Breast epithelium (tissue), 4 donors: ENCODE measurements at regions of chr6 and their contacts with region 1.

Region 1: DNA sequence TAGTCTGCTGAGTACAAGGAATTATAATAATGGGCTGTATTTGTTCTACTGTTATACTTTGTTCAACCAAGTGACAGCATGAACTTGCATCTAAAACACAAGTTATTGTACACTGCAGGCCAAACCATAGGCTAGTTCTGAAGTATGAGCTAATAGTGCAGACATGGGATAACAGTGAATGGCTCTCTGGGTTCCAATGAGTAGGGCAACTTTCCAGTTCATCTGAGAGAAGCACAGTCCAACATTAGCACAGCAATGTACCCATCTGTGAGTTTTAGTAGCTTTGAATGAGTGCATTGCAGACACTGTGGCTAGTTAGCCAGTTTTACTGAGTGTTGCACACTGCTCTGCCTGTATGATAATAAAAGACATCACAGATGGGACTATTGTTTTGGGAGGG is 56.5 kb upstream of the FUT9 start:
- DNase-seq: no peak
- H3K4me3 ChIP-seq: no peak overlapping the region
- H3K27ac ChIP-seq: no peak overlapping the region
- H3K4me1 ChIP-seq: no peaks in the 10 kb centered on the region
- H3K27me3 ChIP-seq: no peaks in the 10 kb centered on the region
- CTCF ChIP-seq: no peak
- POLR2A ChIP-seq: no peak

Region 2: DNA sequence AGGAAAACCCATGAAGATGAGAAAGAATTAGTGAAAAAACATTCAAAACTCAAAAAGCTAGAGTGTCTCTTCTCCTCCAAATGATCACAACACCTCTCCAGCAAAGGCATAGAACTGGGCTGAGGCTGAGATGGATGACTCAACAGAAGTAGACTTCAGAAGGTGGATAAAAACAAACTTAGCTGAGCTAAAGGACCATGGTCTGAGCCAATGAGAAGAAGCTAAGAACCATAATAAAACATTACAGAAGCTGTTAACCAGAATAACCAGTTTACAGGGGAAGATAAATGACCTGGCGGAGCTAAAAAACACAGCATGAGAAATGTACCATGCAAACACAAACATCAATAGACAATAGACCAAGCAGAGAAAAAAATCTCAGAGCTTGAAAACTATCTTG is 1286.0 kb before region 1 on chr6:
- intact Hi-C with region 1: no loop called
- DNase-seq: no peak
- H3K4me3 ChIP-seq: no peak overlapping the region
- H3K27ac ChIP-seq: no peak overlapping the region
- H3K4me1 ChIP-seq: no peaks in the 10 kb centered on the region
- H3K27me3 ChIP-seq: no peaks in the 10 kb centered on the region
- CTCF ChIP-seq: no peak
- POLR2A ChIP-seq: no peak

Region 3: GRCh38 chr6:96124778-96125177 is 165.5 kb after region 1 on chr6:
- intact Hi-C with region 1: loop called (anchors 5 kb)
- DNase-seq: no peak
- H3K4me3 ChIP-seq: no peak overlapping the region
- H3K27ac ChIP-seq: no peak overlapping the region
- H3K4me1 ChIP-seq: no peaks in the 10 kb centered on the region
- H3K27me3 ChIP-seq: no peaks in the 10 kb centered on the region
- CTCF ChIP-seq: no peak
- POLR2A ChIP-seq: no peak

Region 4: DNA sequence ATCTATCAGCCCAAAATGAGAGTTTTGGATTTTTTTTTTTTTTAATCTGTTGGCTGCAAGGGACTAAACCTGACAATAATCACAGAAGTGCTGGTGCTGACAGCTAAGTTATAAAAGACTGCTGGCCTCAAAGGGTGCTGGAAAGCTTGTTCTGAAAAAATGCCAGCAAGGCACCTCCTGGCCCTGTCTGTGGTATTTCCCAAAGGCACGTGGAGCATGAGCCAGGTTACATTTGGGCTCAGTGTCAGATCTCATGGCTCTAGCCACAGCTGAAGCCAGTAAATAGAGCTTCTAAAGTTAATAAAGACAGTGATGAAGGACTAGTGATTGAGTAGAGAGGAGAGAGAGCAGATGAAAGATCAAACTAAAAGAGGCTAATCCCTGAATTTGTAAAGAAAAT is 235.4 kb after region 1 on chr6:
- intact Hi-C with region 1: no loop called
- DNase-seq: peak in 1 of 2 donors; percentile 30
- H3K4me3 ChIP-seq: no peak overlapping the region
- H3K27ac ChIP-seq: no peak overlapping the region
- H3K4me1 ChIP-seq: peaks cover 0 to 3% of the 10 kb centered on the region in 2 donors
- H3K27me3 ChIP-seq: no peaks in the 10 kb centered on the region
- CTCF ChIP-seq: no peak
- POLR2A ChIP-seq: no peak